ENCODE measurements at regions of chr2 and their contacts with region 1.

Region 1: DNA sequence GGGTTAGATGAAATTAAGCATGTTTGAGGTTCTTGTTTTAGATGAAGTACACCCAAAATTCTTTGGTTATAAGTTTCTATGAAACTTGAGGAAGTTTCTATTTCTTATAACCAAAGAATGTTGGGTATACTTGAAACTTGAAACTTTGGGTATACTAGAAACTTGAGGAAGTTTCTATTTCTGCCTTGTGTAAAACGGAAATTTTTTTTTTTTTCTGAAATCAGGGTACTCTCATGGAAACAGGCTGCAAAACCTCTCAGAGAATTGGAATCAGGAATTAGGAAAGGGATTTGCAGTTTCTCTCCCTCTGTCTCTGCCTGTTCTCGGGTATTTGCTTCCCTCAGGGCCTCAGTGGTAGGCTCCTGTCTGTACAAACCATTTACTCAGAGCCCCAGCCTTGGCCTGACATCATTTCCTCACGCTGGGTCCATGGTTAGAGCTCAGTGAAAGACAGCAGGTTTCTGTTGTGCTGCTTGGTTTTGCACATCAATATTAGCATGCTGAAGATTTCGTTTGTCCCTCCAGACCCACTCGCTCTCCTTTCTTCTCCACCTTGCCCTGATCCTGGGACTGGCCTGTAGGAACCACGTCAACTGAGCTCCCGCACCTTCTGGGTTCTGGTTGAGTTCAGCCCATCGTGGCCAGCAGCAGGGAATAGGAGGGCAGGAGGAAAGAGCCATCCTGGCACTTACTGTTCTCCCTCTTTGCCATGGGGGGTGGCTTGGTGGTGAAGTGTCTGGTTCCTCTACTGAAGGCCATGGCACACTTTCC is 106.4 kb downstream of the POLR1A start:
- DNase-seq: peak in 8 of 9 donors; percentile 25 to 62 (median 46)
- ATAC-seq: peak; percentile 83
- H3K4me3 ChIP-seq: peak overlapping the region; percentile 33
- H3K4me3 Mint-ChIP-seq: peak overlapping the region; percentile 55 to 83 (median 68)
- H3K27ac ChIP-seq: peak overlapping the region; percentile 66
- H3K27ac Mint-ChIP-seq: peak overlapping the region; percentile 85 to 96 (median 93)
- H3K4me1 ChIP-seq: peaks cover 48 to 52% of the 10 kb centered on the region in 2 donors
- H3K4me1 Mint-ChIP-seq: peaks cover 36 to 79% (median 64%) of the 10 kb centered on the region in 7 donors
- H3K27me3 ChIP-seq: no peaks in the 10 kb centered on the region
- H3K27me3 Mint-ChIP-seq: no peaks in the 10 kb centered on the region

Region 2: DNA sequence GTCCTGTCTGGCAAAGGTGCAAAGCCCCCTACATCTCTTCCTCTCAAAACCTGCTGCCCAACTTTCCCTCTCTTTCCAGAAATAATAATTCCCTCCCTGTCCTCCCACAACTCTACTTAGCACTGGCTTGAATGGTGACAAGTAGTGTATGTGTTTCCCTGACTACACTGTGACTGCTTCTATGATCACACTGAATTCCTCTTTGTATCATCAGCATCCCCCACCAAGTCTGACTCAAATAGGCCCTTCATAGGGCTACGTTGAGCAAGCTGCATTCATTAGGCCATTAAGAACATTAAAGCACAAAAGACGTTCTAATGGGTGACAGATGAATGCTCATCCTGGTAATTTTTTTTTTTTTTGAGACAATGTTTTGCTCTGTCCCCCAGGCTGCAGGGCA is 96.8 kb before region 1 on chr2:
- CTCF ChIA-PET with region 1: no interaction called
- POLR2A ChIA-PET with region 1: no interaction called
- intact Hi-C with region 1: loop called in 1 of 2 experiments (anchors 5 kb)
- DNase-seq: no peak
- ATAC-seq: no peak
- H3K4me3 ChIP-seq: no peak overlapping the region
- H3K4me3 Mint-ChIP-seq: no peak overlapping the region
- H3K27ac ChIP-seq: no peak overlapping the region
- H3K27ac Mint-ChIP-seq: peak overlapping the region in 2 of 9 donors; percentile 2 to 63
- H3K4me1 ChIP-seq: peaks cover 0 to 7% of the 10 kb centered on the region in 2 donors
- H3K4me1 Mint-ChIP-seq: peaks cover 6 to 41% (median 23%) of the 10 kb centered on the region in 7 donors
- H3K27me3 ChIP-seq: no peaks in the 10 kb centered on the region
- H3K27me3 Mint-ChIP-seq: peaks cover 0 to 4% (median 0%) of the 10 kb centered on the region in 5 donors

Region 3: DNA sequence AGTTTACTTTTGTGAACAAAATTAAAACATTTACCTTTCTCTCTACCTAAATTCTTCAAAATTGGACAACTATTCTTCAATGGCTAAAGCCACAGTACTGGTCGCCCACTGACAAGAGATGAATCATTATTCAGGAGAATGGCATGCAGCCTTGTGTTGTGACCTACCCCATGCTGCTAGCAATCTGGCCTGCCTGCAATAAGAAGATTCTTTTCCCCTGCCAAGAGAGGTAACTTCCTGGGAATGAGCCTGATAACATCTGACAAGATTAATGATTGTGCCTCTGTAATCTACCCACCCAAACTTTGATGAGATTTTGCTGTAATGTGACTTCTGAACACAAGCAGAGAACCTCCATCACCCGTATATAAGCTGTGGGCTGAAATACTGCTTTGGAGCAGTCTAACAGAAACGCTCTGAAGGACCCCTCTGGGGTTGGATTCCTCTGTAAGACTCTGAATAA is 63.5 kb before region 1 on chr2:
- CTCF ChIA-PET with region 1: no interaction called
- POLR2A ChIA-PET with region 1: no interaction called
- intact Hi-C with region 1: loop called in 1 of 2 experiments (anchors 5 kb)
- DNase-seq: no peak
- ATAC-seq: no peak
- H3K4me3 ChIP-seq: no peak overlapping the region
- H3K4me3 Mint-ChIP-seq: no peak overlapping the region
- H3K27ac ChIP-seq: no peak overlapping the region
- H3K27ac Mint-ChIP-seq: no peak overlapping the region
- H3K4me1 ChIP-seq: peaks cover 0 to 11% of the 10 kb centered on the region in 2 donors
- H3K4me1 Mint-ChIP-seq: peaks cover 6 to 30% (median 27%) of the 10 kb centered on the region in 7 donors
- H3K27me3 ChIP-seq: no peaks in the 10 kb centered on the region
- H3K27me3 Mint-ChIP-seq: peaks cover 0 to 10% (median 0%) of the 10 kb centered on the region in 5 donors

Measured in naive thymus-derived CD4-positive, alpha-beta T cell (primary cell).